ENCODE measurements at regions of chrX and their contacts with region 1.

Region 1: DNA sequence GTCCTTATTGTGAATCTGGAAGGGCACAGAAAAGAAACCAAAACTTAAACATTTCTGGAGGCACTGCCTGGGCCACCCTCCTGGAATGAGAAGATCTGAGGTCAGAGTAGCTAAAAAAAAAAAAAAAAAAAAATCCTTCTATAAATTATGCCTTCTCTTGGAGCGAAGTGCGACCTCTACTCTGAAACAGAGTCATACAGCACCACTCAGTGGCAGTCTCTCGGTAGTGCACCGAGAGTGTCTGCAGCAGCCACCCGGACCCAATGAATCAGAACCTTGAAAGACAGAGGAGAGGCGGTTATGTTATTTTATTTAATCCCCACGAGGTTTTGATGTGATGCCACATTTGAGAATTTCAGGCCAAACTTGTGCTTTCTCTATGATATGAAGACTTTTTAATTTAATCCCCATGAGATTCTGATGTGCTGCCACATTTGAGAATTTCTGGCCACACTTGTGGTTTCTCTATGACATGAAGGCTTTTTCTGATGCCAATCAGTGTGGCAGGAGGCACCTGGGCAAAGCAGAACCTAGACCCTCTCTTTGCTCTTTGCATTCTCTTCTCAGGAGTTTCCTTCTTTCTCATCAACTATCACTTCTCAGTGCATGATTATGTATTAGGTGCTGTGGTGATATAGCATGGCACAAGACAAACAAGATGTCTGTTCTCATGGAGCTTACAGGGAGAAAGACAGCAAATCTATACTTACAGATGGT is 5.6 kb upstream of the CT47C1 start:
- DNase-seq: peak; percentile 60
- ATAC-seq: peak; percentile 87
- H3K4me3 Mint-ChIP-seq: no peak overlapping the region
- H3K27ac Mint-ChIP-seq: no peak overlapping the region
- H3K4me1 Mint-ChIP-seq: no peaks in the 10 kb centered on the region
- H3K27me3 Mint-ChIP-seq: no peaks in the 10 kb centered on the region
- CTCF ChIP-seq: peak; percentile 62

Region 2: GRCh38 chrX:118847676-118848075 is 219.5 kb before region 1 on chrX:
- CTCF ChIA-PET with region 1: interaction called, 8 read pairs
- POLR2A ChIA-PET with region 1: no interaction called
- intact Hi-C with region 1: loop called (anchors 5 kb)
- DNase-seq: no peak
- ATAC-seq: peak; percentile 47
- H3K4me3 Mint-ChIP-seq: no peak overlapping the region
- H3K27ac Mint-ChIP-seq: no peak overlapping the region
- H3K4me1 Mint-ChIP-seq: no peaks in the 10 kb centered on the region
- H3K27me3 Mint-ChIP-seq: no peaks in the 10 kb centered on the region
- CTCF ChIP-seq: peak; percentile 49

Region 3: GRCh38 chrX:120281761-120282160 is 1214.6 kb after region 1 on chrX:
- CTCF ChIA-PET with region 1: no interaction called
- POLR2A ChIA-PET with region 1: no interaction called
- intact Hi-C with region 1: no loop called
- DNase-seq: no peak
- ATAC-seq: no peak
- H3K4me3 Mint-ChIP-seq: no peak overlapping the region
- H3K27ac Mint-ChIP-seq: no peak overlapping the region
- H3K4me1 Mint-ChIP-seq: no peaks in the 10 kb centered on the region
- H3K27me3 Mint-ChIP-seq: peaks cover 3% of the 10 kb centered on the region
- CTCF ChIP-seq: no peak